Activated naive CD4-positive, alpha-beta T cell treated with anti-CD3 and anti-CD28 coated beads for 36 hours (primary cell): ENCODE measurements at regions of chr1 and their contacts with region 1.

Region 1: GRCh38 chr1:84433258-84434080 is 35.2 kb downstream of the DNASE2B start:
- DNase-seq: peak; percentile 76
- H3K4me3 Mint-ChIP-seq: peak overlapping the region; percentile 63
- H3K27ac Mint-ChIP-seq: peak overlapping the region; percentile 25
- H3K4me1 Mint-ChIP-seq: peaks cover 15% of the 10 kb centered on the region
- H3K27me3 Mint-ChIP-seq: no peaks in the 10 kb centered on the region

Region 2: DNA sequence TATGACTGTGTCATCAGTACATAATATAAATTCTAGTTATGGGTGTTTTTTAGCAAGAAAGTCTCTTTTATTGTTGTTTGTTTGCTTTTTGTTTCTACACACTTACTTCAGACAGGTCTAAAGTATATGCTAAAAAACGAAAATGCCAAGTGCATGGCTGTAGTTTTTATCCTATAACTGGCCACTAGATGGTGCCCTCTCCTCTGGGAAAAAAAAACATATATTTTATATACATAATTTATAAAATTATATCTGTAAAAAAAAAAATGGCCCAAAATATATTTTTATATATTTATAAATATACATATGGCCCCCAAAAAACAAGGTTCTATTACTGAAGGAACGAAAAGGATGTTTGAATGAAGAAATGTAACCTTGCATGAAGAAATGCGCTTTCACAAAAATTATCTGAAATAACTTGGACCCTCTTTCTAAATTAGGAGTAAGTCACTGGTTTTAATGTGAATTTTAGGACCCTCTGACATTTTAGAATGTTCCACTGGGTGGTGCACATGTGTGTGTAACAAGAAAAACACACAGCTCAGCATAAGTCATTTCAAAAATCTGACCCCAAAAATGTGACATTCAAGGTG is 528.1 kb before region 1 on chr1:
- CTCF ChIA-PET with region 1: interaction called, 3 read pairs
- intact Hi-C with region 1: loop called (anchors 2 kb)
- DNase-seq: peak; percentile 10
- H3K4me3 Mint-ChIP-seq: no peak overlapping the region
- H3K27ac Mint-ChIP-seq: no peak overlapping the region
- H3K4me1 Mint-ChIP-seq: no peaks in the 10 kb centered on the region
- H3K27me3 Mint-ChIP-seq: peaks cover 12% of the 10 kb centered on the region

Region 3: DNA sequence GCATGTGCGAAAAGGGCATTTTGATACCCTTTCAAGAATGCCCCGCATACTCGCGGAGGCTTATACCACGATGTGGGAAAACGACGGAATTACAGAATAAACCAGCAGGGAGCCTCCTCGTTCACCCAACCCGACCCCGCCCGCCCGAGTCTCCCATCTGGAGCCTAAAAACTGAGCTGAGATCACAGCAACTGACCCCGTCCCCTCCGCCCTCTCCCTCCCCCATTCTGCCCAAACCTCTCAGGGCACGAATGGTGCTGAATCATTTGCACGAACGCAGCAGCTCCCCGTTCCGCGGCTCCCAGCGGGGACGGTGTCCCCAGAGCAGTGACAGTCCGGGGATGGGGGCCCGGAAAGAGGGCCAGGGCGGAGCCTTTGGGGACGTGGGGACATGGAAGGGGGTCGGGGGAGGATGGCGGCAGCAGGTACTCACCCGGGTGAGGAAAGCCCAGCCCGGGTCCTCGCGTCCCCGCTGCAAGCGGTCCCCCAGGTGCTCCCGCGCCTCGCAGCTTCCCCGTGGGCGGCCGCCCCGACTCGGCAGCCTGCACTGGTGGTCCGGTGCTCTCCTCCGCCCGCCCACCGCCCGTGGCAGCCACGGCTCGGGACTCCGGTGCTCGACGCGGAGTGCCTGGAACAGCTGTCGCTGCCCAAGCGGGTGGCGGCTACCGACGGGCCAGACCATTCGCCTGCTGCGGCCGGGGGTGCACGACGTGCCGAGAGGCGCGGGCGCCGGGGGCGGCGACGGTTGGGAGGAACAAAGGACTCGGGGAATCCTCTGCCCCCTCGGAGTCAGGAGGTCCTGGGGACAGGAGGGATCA is 434.8 kb before region 1 on chr1 and contains the start of gene TTLL7:
- CTCF ChIA-PET with region 1: no interaction called
- intact Hi-C with region 1: loop called (anchors 2 kb)
- DNase-seq: peak; percentile 59
- H3K4me3 Mint-ChIP-seq: peak within 1 kb of the TSS; percentile 74
- H3K27ac Mint-ChIP-seq: no peak within 1 kb of the TSS
- H3K4me1 Mint-ChIP-seq: peaks cover 7% of the 10 kb centered on the region
- H3K27me3 Mint-ChIP-seq: peaks cover 53% of the 10 kb centered on the region
- total RNA-seq, gene TTLL7: not detected

Region 4: GRCh38 chr1:84298328-84298683 is 135.2 kb before region 1 on chr1:
- CTCF ChIA-PET with region 1: interaction called, 4 read pairs
- intact Hi-C with region 1: loop called (anchors 1 kb)
- DNase-seq: peak; percentile 54
- H3K4me3 Mint-ChIP-seq: peak overlapping the region; percentile 81
- H3K27ac Mint-ChIP-seq: peak overlapping the region; percentile 28
- H3K4me1 Mint-ChIP-seq: peaks cover 35% of the 10 kb centered on the region
- H3K27me3 Mint-ChIP-seq: no peaks in the 10 kb centered on the region

Region 5: DNA sequence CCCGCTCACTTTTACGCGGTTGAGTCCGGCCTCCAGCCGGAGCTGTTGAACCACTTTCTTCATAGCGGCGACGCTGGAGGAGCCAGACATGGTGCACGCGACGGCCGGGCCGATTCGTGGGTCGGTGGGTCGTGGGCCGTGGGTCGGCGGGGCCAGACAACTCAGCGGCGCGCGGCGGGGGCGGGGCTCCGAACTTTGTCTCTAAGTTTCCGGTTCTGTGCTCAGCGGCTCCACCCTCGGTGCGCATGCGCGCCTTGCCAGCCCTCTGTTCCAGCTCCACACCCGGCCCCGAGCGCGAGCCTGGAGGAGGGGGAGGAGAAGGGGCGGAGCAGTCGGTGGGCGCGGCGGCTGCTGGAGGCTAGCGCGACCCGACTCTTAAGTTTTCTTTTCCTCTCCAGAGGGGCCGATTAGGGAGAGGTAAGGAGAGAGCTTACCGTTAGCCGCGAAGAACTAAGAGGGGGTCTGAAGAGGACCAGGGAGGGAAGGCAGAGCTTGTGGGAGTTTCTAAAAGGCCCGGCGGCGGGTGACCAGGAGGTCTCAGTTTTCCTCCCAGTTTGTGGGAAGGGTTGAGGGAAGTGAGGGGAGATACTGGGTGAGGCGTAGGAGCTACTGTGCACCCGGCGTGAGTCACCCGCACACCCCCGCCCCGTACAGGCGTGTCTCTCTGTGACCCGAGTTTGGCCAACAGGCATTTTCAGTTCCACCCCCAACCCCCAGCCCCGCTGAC is 72.7 kb after region 1 on chr1 and contains the starts of genes GNG5 and SPATA1:
- CTCF ChIA-PET with region 1: interaction called, 4 read pairs
- intact Hi-C with region 1: loop called (anchors 2 kb)
- DNase-seq: peak; percentile 97
- H3K4me3 Mint-ChIP-seq: peak within 1 kb of the TSS; percentile 100
- H3K27ac Mint-ChIP-seq: peak within 1 kb of the TSS; percentile 98
- H3K4me1 Mint-ChIP-seq: peaks cover 27% of the 10 kb centered on the region
- H3K27me3 Mint-ChIP-seq: no peaks in the 10 kb centered on the region
- total RNA-seq, gene GNG5: 128 to 132 TPM
- total RNA-seq, gene SPATA1: 1.8 to 2.7 TPM